ENCODE measurements at regions of chr1 and their contacts with region 1.

Region 1: DNA sequence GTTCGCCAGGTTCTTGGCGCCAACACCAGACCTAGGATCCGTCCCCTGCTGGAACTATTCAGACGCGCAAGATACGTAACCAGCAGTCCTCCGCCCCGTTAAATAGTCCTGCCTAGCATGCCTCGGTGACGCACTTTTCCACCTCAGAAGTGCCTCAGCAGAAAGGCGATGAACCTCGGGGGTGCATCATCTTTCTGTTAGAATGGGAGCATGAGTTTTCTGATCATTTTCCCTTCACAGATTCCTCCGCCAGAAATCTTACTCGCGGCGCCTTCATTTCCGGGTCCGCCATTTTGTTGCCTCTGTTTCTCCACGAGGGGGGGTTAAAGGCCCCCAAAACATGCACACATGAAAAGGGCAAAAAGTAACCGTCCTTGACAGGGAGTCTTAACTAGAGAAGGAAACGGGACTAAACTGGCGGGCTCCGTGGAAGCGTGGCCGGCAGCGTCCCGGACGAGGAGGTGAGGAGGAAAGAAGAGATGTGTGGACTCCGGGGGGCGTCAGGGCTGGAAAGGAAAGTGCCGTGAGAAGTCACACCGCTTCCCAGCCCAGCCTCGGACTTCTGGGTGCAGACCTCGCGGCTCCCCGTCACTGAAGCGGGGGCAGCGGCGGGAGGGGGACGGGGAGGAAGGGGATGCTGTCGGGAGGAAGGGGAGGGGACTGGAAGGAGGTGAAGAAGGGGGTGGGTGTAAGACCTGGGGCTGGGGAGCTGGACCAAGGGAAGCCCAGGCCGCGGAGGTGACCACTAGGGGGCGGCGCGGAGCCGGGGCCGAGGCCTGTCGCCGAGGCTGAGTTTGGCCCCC is at the start of gene GABPB2:
- DNase-seq: peak; percentile 93 to 96
- ATAC-seq: peak; percentile 92 to 97 (median 96)
- H3K4me3 ChIP-seq: peak within 1 kb of the TSS; percentile 51 to 95 (median 78)
- H3K27ac ChIP-seq: peak within 1 kb of the TSS; percentile 96 to 100 (median 99)
- H3K4me1 ChIP-seq: peaks cover 4 to 29% (median 20%) of the 10 kb centered on the region in 9 donors
- H3K27me3 ChIP-seq: no peaks in the 10 kb centered on the region
- CTCF ChIP-seq: peak in 8 of 9 donors; percentile 91 to 98 (median 94)
- total RNA-seq, gene GABPB2: 9.1 to 14.4 (median 10.6) TPM

Region 2: GRCh38 chr1:151047925-151048645 is 22.6 kb before region 1 on chr1:
- intact Hi-C with region 1: loop called in 1 of 10 experiments (anchors 1 kb)
- DNase-seq: peak; percentile 73
- ATAC-seq: peak; percentile 73 to 90 (median 86)
- H3K4me3 ChIP-seq: peak overlapping the region; percentile 44 to 98 (median 76)
- H3K27ac ChIP-seq: peak overlapping the region; percentile 71 to 95 (median 90)
- H3K4me1 ChIP-seq: peaks cover 0 to 38% (median 28%) of the 10 kb centered on the region in 9 donors
- H3K27me3 ChIP-seq: no peaks in the 10 kb centered on the region
- CTCF ChIP-seq: peak in 8 of 9 donors; percentile 25 to 68 (median 57)

Region 3: GRCh38 chr1:151059078-151059907 is 11.4 kb before region 1 on chr1 and contains the start of gene CDC42SE1:
- intact Hi-C with region 1: loop called in 1 of 10 experiments (anchors 1 kb)
- DNase-seq: peak; percentile 84 to 87
- ATAC-seq: peak; percentile 93 to 96 (median 94)
- H3K4me3 ChIP-seq: peak within 1 kb of the TSS; percentile 47 to 93 (median 79)
- H3K27ac ChIP-seq: peak within 1 kb of the TSS; percentile 80 to 100 (median 97)
- H3K4me1 ChIP-seq: peaks cover 16 to 67% (median 39%) of the 10 kb centered on the region in 9 donors
- H3K27me3 ChIP-seq: no peaks in the 10 kb centered on the region
- CTCF ChIP-seq: peak; percentile 63 to 95 (median 89)
- total RNA-seq, gene CDC42SE1: 26.1 to 45.6 (median 30.5) TPM

Region 4: DNA sequence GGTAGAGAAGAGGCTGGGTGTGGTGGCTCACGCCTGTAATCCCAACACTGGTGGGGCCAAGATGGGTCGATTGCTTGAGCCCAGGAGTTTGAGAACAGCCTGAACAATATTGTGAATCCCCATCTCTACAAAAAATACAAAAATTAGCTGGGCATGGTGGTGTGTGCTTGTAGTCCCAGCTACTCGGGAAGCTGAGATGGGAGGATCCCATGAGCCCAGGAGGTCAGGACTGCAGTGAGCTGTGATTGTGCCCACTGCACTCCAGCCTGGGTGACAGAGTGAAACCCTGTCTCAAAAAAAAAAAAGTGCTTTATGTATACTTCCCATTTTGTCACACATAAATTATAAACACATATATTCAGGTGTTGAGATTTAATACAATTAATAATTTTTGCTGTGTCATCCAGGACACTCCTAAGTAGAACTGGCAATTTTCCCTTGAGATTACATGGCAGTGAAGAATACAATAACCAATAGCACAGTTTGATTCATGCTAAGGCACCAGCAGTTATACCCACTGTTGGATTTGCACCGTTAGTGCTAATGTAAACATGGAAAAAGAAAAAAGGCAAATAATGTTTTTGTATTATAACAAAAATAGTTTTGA is 15.4 kb after region 1 on chr1:
- intact Hi-C with region 1: no loop called
- DNase-seq: no peak
- ATAC-seq: no peak
- H3K4me3 ChIP-seq: no peak overlapping the region
- H3K27ac ChIP-seq: no peak overlapping the region
- H3K4me1 ChIP-seq: no peaks in the 10 kb centered on the region
- H3K27me3 ChIP-seq: no peaks in the 10 kb centered on the region
- CTCF ChIP-seq: no peak

Region 5: GRCh38 chr1:151146412-151147140 is 75.9 kb after region 1 on chr1 and contains the start of gene SEMA6C:
- intact Hi-C with region 1: loop called in 1 of 10 experiments (anchors 5 kb)
- DNase-seq: peak; percentile 96 to 97
- ATAC-seq: peak; percentile 92 to 95 (median 94)
- H3K4me3 ChIP-seq: peak within 1 kb of the TSS; percentile 83 to 100 (median 94)
- H3K27ac ChIP-seq: peak within 1 kb of the TSS; percentile 82 to 96 (median 89)
- H3K4me1 ChIP-seq: peaks cover 21 to 58% (median 46%) of the 10 kb centered on the region in 9 donors
- H3K27me3 ChIP-seq: peaks cover 0 to 15% (median 0%) of the 10 kb centered on the region in 7 donors
- CTCF ChIP-seq: no peak
- total RNA-seq, gene SEMA6C: 23.2 to 68.1 (median 54.9) TPM

Measured in heart right ventricle (tissue), 16 donors.